ENCODE measurements at regions of chr20 and their contacts with region 1.

Region 1: GRCh38 chr20:62772990-62773844 is 23.1 kb upstream of the MRGBP start:
- DNase-seq: peak; percentile 76
- H3K4me3 ChIP-seq: no peak overlapping the region
- H3K27ac ChIP-seq: no peak overlapping the region
- H3K4me1 ChIP-seq: peaks cover 37% of the 10 kb centered on the region
- H3K27me3 ChIP-seq: no peaks in the 10 kb centered on the region
- CTCF ChIP-seq: no peak

Region 2: DNA sequence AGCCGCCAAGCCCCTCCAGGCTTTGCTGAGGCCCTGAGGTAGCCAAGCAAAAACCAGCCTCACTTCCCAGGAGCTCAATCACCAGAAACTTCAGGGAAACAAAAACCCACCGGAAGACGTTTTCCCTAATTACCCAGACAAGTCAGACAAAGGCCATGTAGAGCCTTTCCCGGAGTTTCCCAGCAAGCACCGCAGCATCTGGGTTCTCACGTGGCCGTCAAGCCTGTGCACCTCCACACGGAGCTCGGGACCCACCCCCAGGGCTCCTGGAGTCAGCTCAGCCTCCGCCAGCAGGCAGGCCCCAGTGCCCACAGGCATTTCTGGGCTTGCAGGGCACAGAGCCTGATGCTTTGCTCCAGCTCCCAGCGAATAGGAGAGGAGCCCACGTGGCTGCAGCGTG is 12.9 kb after region 1 on chr20:
- CTCF ChIA-PET with region 1: no interaction called
- dilution Hi-C with region 1: no loop called
- in situ Hi-C with region 1: no loop called
- intact Hi-C with region 1: loop called (anchors 1 kb)
- DNase-seq: no peak
- H3K4me3 ChIP-seq: no peak overlapping the region
- H3K27ac ChIP-seq: no peak overlapping the region
- H3K4me1 ChIP-seq: peaks cover 1% of the 10 kb centered on the region
- H3K27me3 ChIP-seq: no peaks in the 10 kb centered on the region
- CTCF ChIP-seq: no peak

Measured in mammary epithelial cell (primary cell).